CD8-positive, alpha-beta T cell (primary cell): ENCODE measurements at regions of chr6 and their contacts with region 1.

Region 1: GRCh38 chr6:89287351-89288028 is 27.6 kb downstream of the GABRR2 start:
- DNase-seq: no peak
- ATAC-seq: no peak
- H3K4me3 ChIP-seq: no peak overlapping the region
- H3K4me3 Mint-ChIP-seq: no peak overlapping the region
- H3K27ac ChIP-seq: no peak overlapping the region
- H3K27ac Mint-ChIP-seq: no peak overlapping the region
- H3K4me1 ChIP-seq: no peaks in the 10 kb centered on the region
- H3K4me1 Mint-ChIP-seq: no peaks in the 10 kb centered on the region
- H3K27me3 ChIP-seq: no peaks in the 10 kb centered on the region
- H3K27me3 Mint-ChIP-seq: no peaks in the 10 kb centered on the region
- CTCF ChIP-seq: no peak

Region 2: GRCh38 chr6:89311853-89312531 is 24.5 kb after region 1 on chr6:
- CTCF ChIA-PET with region 1: no interaction called
- POLR2A ChIA-PET with region 1: no interaction called
- intact Hi-C with region 1: loop called in 1 of 2 experiments (anchors 2 kb)
- DNase-seq: no peak
- ATAC-seq: no peak
- H3K4me3 ChIP-seq: no peak overlapping the region
- H3K4me3 Mint-ChIP-seq: no peak overlapping the region
- H3K27ac ChIP-seq: no peak overlapping the region
- H3K27ac Mint-ChIP-seq: no peak overlapping the region
- H3K4me1 ChIP-seq: no peaks in the 10 kb centered on the region
- H3K4me1 Mint-ChIP-seq: no peaks in the 10 kb centered on the region
- H3K27me3 ChIP-seq: no peaks in the 10 kb centered on the region
- H3K27me3 Mint-ChIP-seq: no peaks in the 10 kb centered on the region
- CTCF ChIP-seq: no peak